ENCODE measurements at regions of chr12 and their contacts with region 1.

Region 1: GRCh38 chr12:25250744-25251730 is at the start of gene KRAS:
- DNase-seq: peak; percentile 88
- ATAC-seq: peak; percentile 95
- H3K4me3 ChIP-seq: peak within 1 kb of the TSS; percentile 75 to 82 (median 80)
- H3K27ac ChIP-seq: peak within 1 kb of the TSS; percentile 64
- H3K4me1 ChIP-seq: peaks cover 56% of the 10 kb centered on the region
- H3K27me3 ChIP-seq: no peaks in the 10 kb centered on the region; a peak in 1 of 5 replicates
- CTCF ChIP-seq: no peak
- EP300 ChIP-seq: no peak
- POLR2A ChIP-seq: peak in 1 of 2 experiments; percentile 46; a peak in 3 of 4 replicates
- RAD21 ChIP-seq: 0 out of 2 replicates have a peak, but pooled peaks have one; percentile 9
- total RNA-seq, gene KRAS: 9.8 and 18.4 TPM in 2 replicates

Region 2: DNA sequence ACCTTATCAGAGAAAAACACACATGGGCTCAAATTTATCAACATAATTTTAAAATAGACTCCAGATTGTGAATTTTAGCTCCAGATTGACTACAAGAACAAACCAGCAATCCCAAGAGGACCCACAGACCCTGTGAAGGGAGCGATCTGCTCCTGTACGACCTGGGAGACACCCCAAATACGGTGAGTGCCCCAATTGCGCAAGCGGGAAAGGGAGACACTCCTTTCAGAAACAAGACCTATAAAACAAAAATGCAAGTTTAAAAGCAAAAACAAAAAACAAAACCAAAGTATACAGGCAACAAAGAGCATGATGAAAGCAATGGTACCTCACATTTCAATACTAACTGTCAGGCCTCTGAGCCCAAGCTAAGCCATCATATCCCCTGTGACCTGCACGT is 88.2 kb before region 1 on chr12:
- CTCF ChIA-PET with region 1: no interaction called
- POLR2A ChIA-PET with region 1: no interaction called
- in situ Hi-C with region 1: no loop called
- intact Hi-C with region 1: no loop called
- DNase-seq: no peak
- ATAC-seq: no peak
- H3K4me3 ChIP-seq: no peak overlapping the region
- H3K27ac ChIP-seq: no peak overlapping the region
- H3K4me1 ChIP-seq: no peaks in the 10 kb centered on the region
- H3K27me3 ChIP-seq: 0 out of 5 replicates have a peak, but pooled peaks cover 0 to under 1% of the 10 kb centered on the region in 2 experiments
- CTCF ChIP-seq: no peak
- EP300 ChIP-seq: no peak
- POLR2A ChIP-seq: no peak
- RAD21 ChIP-seq: no peak

Region 3: DNA sequence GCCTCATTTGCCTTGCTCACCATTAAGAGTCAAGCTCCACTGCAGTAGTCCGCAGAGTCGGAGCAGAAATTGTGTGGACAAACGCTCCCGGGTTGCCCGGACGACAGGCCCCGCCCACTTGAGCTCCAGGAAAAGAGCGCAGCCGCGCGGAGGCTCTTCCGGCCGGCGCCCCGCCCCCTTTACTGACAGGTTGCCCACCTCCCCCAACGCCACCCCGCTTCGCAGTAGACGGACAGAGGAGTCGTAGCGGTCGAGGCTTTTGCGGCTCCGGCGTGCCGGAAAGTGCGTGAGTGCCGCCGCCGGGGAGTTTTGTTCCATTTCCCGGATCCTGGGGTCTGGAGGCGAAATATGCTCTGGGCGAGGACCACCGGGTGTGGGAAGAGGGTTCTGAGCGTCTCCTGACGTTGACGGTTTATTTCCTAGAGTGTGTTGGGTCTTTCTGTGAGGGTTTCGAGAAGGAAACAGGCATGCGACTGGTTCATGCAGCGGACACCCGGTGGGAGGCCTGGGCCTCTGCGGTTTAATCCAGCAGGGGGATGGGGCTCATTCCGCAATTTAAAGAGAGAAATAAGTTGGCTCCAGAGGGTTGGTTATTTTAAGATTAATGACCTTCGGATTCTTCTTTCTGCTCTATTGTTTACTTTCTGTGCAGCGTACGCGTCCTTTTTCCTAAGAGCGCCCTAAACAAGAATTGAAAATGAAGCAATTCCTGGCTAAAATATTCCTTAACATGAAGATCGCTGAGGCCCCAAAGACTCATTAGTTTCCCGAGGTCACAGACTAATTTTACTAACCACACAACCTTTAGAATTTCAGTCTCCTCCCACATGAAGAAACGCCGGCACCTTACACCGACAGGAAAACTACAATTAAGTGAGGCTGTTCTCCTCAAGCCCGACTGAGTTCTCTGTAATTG is 55.7 kb before region 1 on chr12 and contains the starts of genes DNAI7 and ETFRF1:
- CTCF ChIA-PET with region 1: no interaction called
- POLR2A ChIA-PET with region 1: interaction called, 4 read pairs
- in situ Hi-C with region 1: no loop called
- intact Hi-C with region 1: loop called (anchors 1 kb)
- DNase-seq: peak; percentile 91
- ATAC-seq: peak; percentile 97
- H3K4me3 ChIP-seq: peak within 1 kb of the TSS; percentile 79 to 90 (median 81)
- H3K27ac ChIP-seq: peak within 1 kb of the TSS; percentile 92
- H3K4me1 ChIP-seq: peaks cover 20% of the 10 kb centered on the region
- H3K27me3 ChIP-seq: no peaks in the 10 kb centered on the region
- CTCF ChIP-seq: no peak
- EP300 ChIP-seq: no peak
- POLR2A ChIP-seq: peak; percentile 84 to 89
- RAD21 ChIP-seq: peak; percentile 21; the same call in 1 of the 2 replicates
- total RNA-seq, gene DNAI7: 0.04 TPM in 1 of 2 replicates, not detected in the other
- total RNA-seq, gene ETFRF1: 7.0 and 9.3 TPM in 2 replicates

Region 4: DNA sequence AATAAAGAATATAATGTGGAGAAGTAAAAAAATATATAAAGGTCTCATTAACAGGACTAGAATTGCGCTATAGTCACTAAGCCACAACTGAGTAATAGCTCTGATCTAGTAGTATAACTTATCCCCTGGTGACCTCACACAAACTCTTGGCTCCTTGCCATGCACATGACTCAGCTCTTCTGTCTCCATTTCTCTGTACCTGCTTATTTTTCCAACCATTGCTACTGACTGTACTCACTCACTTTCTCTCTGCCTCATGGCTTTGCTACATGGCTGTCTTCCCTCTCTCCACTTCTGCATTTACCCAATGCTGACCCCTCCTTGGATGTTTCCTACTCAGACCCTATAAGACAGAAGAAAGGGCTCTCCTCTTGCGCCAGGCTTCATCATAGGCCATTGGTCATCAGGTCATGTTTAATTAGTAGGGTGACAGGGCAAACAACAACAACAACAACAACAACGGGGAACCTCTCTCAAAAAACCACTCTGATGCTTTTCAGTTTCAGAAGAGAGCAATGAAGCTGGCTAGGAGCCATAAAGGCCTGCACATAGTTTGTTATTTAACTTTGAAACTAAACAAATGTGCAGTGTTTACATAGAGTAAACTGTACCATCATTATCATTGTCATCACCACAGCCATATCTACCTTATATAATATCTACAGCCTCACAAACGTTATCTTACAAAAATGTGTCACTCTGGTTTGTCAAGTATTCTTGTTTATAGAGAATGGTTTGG is 25.3 kb after region 1 on chr12:
- CTCF ChIA-PET with region 1: no interaction called
- POLR2A ChIA-PET with region 1: interaction called, 4 read pairs
- in situ Hi-C with region 1: no loop called
- intact Hi-C with region 1: loop called (anchors 2 kb)
- DNase-seq: peak; percentile 63
- ATAC-seq: peak; percentile 79
- H3K4me3 ChIP-seq: peak overlapping the region in 1 of 3 experiments; percentile 7; a peak in 1 of 6 replicates
- H3K27ac ChIP-seq: peak overlapping the region; percentile 25
- H3K4me1 ChIP-seq: peaks cover 12% of the 10 kb centered on the region
- H3K27me3 ChIP-seq: no peaks in the 10 kb centered on the region
- CTCF ChIP-seq: no peak
- EP300 ChIP-seq: peak in 1 of 2 experiments; percentile 6; a peak in 1 of 4 replicates
- POLR2A ChIP-seq: no peak
- RAD21 ChIP-seq: no peak

Region 5: DNA sequence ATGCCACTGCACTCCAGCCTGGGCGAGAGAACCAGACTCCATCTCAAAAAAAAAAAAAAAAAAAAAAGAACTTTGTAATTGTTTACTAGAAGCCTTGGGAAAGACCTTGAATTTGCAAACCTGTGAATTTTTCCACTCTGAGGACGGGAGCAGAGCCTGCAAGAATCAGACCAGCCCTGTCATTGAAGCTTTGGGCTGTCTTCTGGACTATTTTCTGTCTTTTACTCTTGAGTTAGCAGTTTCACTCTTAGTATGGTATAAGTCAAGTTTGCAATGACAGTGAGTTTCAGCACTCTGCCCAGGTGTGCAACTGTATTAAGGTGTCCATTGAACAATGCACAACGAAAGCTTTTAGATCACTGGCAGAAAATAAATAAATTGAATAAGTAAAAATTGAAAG is 81.1 kb after region 1 on chr12:
- CTCF ChIA-PET with region 1: no interaction called
- POLR2A ChIA-PET with region 1: no interaction called
- in situ Hi-C with region 1: no loop called
- intact Hi-C with region 1: loop called (anchors 10 kb)
- DNase-seq: no peak
- ATAC-seq: no peak
- H3K4me3 ChIP-seq: no peak overlapping the region
- H3K27ac ChIP-seq: no peak overlapping the region
- H3K4me1 ChIP-seq: no peaks in the 10 kb centered on the region
- H3K27me3 ChIP-seq: no peaks in the 10 kb centered on the region
- CTCF ChIP-seq: no peak
- EP300 ChIP-seq: no peak
- POLR2A ChIP-seq: no peak
- RAD21 ChIP-seq: no peak

Region 6: GRCh38 chr12:25401547-25402345 is 150.7 kb after region 1 on chr12:
- CTCF ChIA-PET with region 1: no interaction called
- POLR2A ChIA-PET with region 1: no interaction called
- in situ Hi-C with region 1: no loop called
- intact Hi-C with region 1: no loop called
- DNase-seq: no peak
- ATAC-seq: no peak
- H3K4me3 ChIP-seq: no peak overlapping the region
- H3K27ac ChIP-seq: no peak overlapping the region
- H3K4me1 ChIP-seq: no peaks in the 10 kb centered on the region
- H3K27me3 ChIP-seq: no peaks in the 10 kb centered on the region
- CTCF ChIP-seq: no peak
- EP300 ChIP-seq: no peak
- POLR2A ChIP-seq: no peak
- RAD21 ChIP-seq: no peak

Measured in HepG2 (cell line).